IMR-90 (cell line): ENCODE measurements at regions of chr3 and their contacts with region 1.

Region 1: DNA sequence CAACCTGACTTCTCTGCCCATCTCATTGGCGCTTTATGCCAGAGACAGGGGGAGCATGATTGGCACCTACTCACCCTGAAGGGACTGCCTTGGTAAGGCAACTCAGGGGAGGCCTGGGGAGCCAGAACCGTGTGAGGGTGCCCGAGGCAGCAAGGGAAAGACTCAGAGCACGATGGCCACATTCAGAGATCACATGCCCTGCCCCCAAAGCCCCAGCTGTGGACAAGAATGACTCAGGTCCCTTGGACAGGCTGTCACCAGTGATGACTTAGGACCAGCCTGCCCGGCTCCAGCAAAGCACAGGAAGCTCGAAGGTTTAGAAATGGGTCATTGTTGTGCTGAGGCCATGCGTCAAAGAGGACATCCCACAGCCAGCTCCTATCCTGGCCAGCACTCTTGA is 49.1 kb upstream of the LIMD1 start:
- DNase-seq: peak; percentile 45
- ATAC-seq: peak; percentile 18; the same call in 1 of the 2 replicates
- H3K4me3 ChIP-seq: no peak overlapping the region
- H3K27ac ChIP-seq: no peak overlapping the region; the same call in 1 of the 2 replicates
- H3K4me1 ChIP-seq: peaks cover 27% of the 10 kb centered on the region
- H3K27me3 ChIP-seq: no peaks in the 10 kb centered on the region
- CTCF ChIP-seq: no peak
- POLR2A ChIP-seq: no peak
- RAD21 ChIP-seq: no peak

Region 2: DNA sequence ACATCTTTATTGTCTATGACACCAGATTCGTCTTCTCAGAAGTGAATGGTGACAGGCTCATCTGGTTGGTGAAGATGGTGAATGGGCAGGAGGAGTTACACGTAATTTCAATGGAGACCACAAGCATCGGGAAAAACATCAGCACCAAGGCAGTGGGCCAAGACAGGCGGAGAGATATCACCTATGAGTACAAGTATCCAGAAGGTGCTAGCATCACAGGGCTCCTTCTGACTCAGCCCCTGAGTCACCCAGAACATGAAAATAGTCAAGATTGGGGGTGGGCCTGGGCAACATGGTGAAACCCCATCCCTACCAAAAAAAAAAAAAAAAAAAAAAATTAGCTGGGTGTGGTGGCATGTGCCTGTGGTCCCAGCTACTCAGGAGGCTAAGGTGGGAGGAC is 638.5 kb before region 1 on chr3:
- CTCF ChIA-PET with region 1: no interaction called
- POLR2A ChIA-PET with region 1: interaction called, 20 read pairs
- dilution Hi-C with region 1: no loop called
- in situ Hi-C with region 1: no loop called
- intact Hi-C with region 1: no loop called
- DNase-seq: peak; percentile 25
- ATAC-seq: no peak
- H3K4me3 ChIP-seq: no peak overlapping the region
- H3K27ac ChIP-seq: no peak overlapping the region
- H3K4me1 ChIP-seq: no peaks in the 10 kb centered on the region
- H3K27me3 ChIP-seq: peaks cover 3% of the 10 kb centered on the region; the same call in 1 of the 2 replicates
- CTCF ChIP-seq: no peak
- POLR2A ChIP-seq: no peak
- RAD21 ChIP-seq: no peak

Region 3: DNA sequence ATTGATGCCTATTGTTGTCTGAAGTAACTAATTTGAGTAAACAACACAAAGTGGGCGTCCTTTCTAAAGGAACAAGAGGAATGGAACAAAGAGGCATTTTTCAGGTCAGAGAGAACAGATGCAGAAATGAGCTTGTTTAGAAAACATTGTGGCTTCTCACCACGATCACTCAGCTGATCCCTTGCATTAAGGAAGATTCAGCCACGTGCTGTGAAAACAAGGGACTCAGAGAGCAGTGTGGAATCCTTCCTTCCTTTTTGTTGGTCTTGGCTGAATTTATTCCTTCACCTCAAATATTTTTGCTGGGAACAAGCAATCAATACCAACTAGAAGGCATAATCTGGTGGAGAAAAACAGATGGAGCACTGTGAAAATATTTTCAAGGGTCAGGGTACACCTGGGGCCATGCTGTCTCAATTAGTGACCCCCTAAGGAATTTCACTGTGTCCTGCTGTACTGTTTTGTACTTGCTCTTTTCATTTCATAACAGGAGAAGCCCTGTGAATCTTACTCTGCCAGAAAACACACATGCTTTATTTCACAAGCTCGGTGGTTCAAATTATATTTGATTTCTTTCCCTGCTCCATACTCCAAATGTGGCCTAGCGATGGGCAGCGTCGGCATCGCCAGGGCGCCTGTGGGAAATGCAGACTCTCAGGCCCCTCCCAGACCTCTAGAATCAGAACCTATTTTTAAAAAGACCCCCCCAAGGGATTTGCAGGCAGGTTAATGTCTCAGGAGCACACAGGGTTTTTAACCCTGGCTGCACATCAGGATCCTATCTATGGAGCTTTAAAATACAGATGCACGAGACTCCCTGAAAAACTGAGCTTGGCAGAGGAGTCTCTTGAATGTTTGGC is 262.4 kb after region 1 on chr3:
- CTCF ChIA-PET with region 1: no interaction called
- POLR2A ChIA-PET with region 1: no interaction called
- dilution Hi-C with region 1: no loop called
- in situ Hi-C with region 1: no loop called
- intact Hi-C with region 1: no loop called
- DNase-seq: no peak
- ATAC-seq: no peak
- H3K4me3 ChIP-seq: no peak overlapping the region
- H3K27ac ChIP-seq: no peak overlapping the region
- H3K4me1 ChIP-seq: no peaks in the 10 kb centered on the region
- H3K27me3 ChIP-seq: peaks cover 17% of the 10 kb centered on the region
- CTCF ChIP-seq: no peak
- POLR2A ChIP-seq: no peak
- RAD21 ChIP-seq: no peak